GM10248 (cell line): ENCODE measurements at regions of chr15 and their contacts with region 1.

Region 1: DNA sequence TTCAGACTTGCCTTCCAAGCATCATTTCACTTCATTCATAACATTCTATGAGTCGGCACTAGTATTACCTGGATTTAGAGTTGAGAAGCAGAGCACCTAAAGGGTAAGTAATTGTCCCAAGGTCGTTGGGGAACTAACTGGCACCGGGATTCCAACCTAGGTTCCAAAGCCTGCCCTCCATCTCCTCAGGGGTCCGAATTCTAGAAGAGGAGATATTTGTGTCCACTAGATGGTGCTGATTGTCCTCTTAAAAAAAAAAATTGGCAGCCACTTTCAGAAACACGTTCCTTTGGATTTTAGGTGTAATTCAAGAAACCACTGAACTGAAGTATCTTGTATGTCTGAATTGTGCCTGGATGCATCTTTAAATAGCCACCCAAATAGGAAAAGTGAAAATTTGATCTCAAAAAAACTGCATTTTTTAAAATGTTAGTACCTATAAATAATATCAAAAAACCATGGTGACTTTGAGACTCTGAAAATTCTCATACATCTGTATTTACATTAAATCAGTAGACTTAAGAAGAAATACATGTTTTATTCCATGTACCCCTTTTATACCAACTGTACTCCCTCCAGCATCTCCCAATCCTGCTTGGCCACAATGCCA is 3.9 kb upstream of the FSIP1 start:
- DNase-seq: peak; percentile 47
- CTCF ChIP-seq: peak; percentile 54

Region 2: GRCh38 chr15:39799552-39800011 is 13.0 kb after region 1 on chr15:
- CTCF ChIA-PET with region 1: interaction called, 41 read pairs
- POLR2A ChIA-PET with region 1: no interaction called
- DNase-seq: no peak
- CTCF ChIP-seq: no peak

Region 3: GRCh38 chr15:39874890-39875549 is 88.5 kb after region 1 on chr15:
- CTCF ChIA-PET with region 1: interaction called, 17 read pairs
- POLR2A ChIA-PET with region 1: no interaction called
- DNase-seq: peak; percentile 35
- CTCF ChIP-seq: peak; percentile 32